Prostate gland (tissue), 2 donors: ENCODE measurements at regions of chr13 and their contacts with region 1.

Region 1: DNA sequence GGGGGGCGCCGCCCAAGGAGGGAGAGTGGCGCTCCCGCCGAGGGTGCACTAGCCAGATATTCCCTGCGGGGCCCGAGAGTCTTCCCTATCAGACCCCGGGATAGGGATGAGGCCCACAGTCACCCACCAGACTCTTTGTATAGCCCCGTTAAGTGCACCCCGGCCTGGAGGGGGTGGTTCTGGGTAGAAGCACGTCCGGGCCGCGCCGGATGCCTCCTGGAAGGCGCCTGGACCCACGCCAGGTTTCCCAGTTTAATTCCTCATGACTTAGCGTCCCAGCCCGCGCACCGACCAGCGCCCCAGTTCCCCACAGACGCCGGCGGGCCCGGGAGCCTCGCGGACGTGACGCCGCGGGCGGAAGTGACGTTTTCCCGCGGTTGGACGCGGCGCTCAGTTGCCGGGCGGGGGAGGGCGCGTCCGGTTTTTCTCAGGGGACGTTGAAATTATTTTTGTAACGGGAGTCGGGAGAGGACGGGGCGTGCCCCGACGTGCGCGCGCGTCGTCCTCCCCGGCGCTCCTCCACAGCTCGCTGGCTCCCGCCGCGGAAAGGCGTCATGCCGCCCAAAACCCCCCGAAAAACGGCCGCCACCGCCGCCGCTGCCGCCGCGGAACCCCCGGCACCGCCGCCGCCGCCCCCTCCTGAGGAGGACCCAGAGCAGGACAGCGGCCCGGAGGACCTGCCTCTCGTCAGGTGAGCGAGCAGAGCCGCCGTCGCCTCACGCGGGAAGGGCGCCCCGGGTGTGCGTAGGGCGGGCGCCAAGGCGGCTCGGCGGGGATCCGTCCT is at the start of gene RB1:
- DNase-seq: peak; percentile 87
- H3K4me3 ChIP-seq: peak within 1 kb of the TSS; percentile 86 to 96
- H3K27ac ChIP-seq: peak within 1 kb of the TSS; percentile 97 to 99
- H3K4me1 ChIP-seq: no peaks in the 10 kb centered on the region
- H3K27me3 ChIP-seq: no peaks in the 10 kb centered on the region
- CTCF ChIP-seq: peak in 1 of 4 experiments; percentile 16
- POLR2A ChIP-seq: peak; percentile 95
- total RNA-seq, gene RB1: 42.1 to 43.7 TPM

Region 2: GRCh38 chr13:48000778-48001628 is 302.5 kb before region 1 on chr13 and contains the start of gene SUCLA2:
- intact Hi-C with region 1: no loop called
- DNase-seq: peak; percentile 79
- H3K4me3 ChIP-seq: peak within 1 kb of the TSS; percentile 80 to 90
- H3K27ac ChIP-seq: peak within 1 kb of the TSS; percentile 73 to 80
- H3K4me1 ChIP-seq: no peaks in the 10 kb centered on the region
- H3K27me3 ChIP-seq: no peaks in the 10 kb centered on the region
- CTCF ChIP-seq: peak in 2 of 4 experiments; percentile 15 to 20
- POLR2A ChIP-seq: peak; percentile 65
- total RNA-seq, gene SUCLA2: 42.1 to 45.7 TPM

Region 3: DNA sequence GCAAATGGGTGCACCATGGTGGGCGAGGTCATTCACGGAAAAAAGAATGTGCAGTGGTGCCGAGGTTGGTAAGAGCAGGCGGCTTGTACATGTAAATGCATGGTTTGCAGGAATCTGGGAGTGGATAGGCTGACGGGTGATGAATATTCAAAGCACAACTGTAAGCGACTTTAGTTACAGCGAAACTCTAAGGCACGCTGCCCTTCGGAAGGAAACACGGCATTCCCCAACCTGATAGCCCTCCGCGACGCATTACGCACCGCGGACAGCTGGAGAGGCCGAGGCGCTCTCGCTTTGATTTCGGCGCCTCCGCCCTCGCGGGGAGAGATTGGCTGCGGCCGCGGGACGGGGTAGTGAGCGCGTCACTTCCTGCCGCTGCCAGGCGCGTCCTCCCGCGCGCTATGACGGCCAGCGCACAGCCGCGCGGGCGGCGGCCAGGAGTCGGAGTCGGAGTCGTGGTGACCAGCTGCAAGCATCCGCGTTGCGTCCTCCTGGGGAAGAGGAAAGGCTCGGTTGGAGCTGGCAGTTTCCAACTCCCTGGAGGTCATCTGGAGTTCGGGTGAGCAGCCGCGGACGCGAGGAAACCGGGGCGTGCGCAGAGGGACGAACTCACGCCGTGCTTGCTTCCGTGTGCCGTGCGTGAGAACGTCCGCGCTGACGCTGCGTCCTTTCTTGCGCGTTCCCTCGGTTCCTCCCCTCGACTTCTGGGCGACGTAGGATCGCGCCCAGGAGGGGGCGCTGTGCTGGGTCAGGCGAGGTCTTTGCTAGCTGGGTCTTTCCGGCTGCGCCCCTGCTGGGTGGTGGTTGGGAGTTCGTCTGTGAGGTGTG is 266.0 kb before region 1 on chr13 and contains the start of gene NUDT15:
- intact Hi-C with region 1: loop called (anchors 5 kb)
- DNase-seq: peak; percentile 92
- H3K4me3 ChIP-seq: peak within 1 kb of the TSS; percentile 62 to 63
- H3K27ac ChIP-seq: peak within 1 kb of the TSS; percentile 96
- H3K4me1 ChIP-seq: no peaks in the 10 kb centered on the region
- H3K27me3 ChIP-seq: no peaks in the 10 kb centered on the region
- CTCF ChIP-seq: peak; percentile 97 to 98 (median 97)
- POLR2A ChIP-seq: peak; percentile 75
- total RNA-seq, gene NUDT15: 11.7 to 26.9 TPM

Region 4: GRCh38 chr13:48094781-48095502 is 208.6 kb before region 1 on chr13 and contains the start of gene MED4:
- intact Hi-C with region 1: loop called (anchors 10 kb)
- DNase-seq: peak; percentile 91
- H3K4me3 ChIP-seq: peak within 1 kb of the TSS; percentile 96 to 97
- H3K27ac ChIP-seq: peak within 1 kb of the TSS; percentile 77 to 83
- H3K4me1 ChIP-seq: no peaks in the 10 kb centered on the region
- H3K27me3 ChIP-seq: no peaks in the 10 kb centered on the region
- CTCF ChIP-seq: peak; percentile 97 to 99 (median 99)
- POLR2A ChIP-seq: peak; percentile 70
- total RNA-seq, gene MED4: 33.9 to 36.4 TPM

Region 5: GRCh38 chr13:48121733-48122132 is 181.8 kb before region 1 on chr13:
- intact Hi-C with region 1: loop called (anchors 5 kb)
- DNase-seq: no peak
- H3K4me3 ChIP-seq: no peak overlapping the region
- H3K27ac ChIP-seq: no peak overlapping the region
- H3K4me1 ChIP-seq: peaks cover 9% of the 10 kb centered on the region
- H3K27me3 ChIP-seq: no peaks in the 10 kb centered on the region
- CTCF ChIP-seq: no peak
- POLR2A ChIP-seq: no peak

Region 6: DNA sequence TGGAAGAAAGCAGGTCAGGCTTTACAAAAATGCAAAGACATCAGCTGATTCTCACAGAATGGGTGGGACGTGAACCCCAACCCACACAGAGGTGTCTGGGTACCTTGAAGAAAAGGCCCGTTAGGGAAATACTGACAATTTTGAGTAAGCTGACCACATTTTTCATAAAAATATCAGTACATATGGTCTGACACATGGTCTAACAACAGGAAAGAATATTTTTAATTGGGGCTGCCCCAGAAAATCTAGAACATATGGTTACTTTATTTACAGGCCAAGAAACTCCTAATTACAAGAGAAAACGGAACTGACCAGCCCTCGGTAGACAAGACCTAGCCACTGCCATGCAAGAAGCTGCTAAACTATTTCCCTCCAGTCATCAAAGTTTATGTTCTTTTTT is 119.3 kb before region 1 on chr13:
- intact Hi-C with region 1: no loop called
- DNase-seq: no peak
- H3K4me3 ChIP-seq: no peak overlapping the region
- H3K27ac ChIP-seq: no peak overlapping the region
- H3K4me1 ChIP-seq: no peaks in the 10 kb centered on the region
- H3K27me3 ChIP-seq: no peaks in the 10 kb centered on the region
- CTCF ChIP-seq: no peak
- POLR2A ChIP-seq: no peak